Testis (tissue), 5 donors: ENCODE measurements at regions of chr12 and their contacts with region 1.

Region 1: DNA sequence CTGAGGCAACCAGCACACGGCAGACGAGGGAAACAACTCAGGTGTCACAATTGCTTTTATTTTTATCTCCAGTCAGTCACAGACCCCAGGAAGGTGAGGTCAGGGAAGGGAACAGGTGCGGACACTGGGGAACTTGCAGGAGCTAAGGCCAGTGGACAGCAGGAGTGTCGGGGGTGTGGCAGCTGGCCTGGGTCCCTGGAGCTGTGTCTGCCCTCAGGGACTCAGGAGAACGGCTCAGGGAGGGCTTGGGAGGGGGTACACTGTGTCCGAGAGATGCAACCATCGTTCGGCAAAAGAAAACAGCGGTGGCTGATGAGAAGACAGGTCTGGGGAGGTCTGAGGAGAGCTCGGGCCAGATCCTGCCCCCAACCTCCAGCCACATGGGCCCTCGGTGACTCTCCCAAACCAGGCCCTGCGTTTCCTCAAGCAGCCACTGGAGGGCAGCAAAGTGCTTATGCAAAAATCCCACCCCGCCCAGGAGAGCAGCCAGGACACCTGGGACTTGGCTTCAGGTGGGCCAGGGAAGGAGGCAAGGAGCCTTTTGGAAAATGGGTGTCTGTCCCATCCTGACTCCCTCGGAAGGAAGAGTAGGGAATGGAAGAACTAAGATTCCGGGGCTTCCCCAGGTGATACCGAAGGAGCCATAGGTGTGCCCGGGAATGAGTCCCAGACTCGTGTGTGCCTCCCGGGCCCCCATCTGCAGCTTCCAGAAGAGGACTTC is 24.1 kb upstream of the BCDIN3D start:
- DNase-seq: peak; percentile 88
- H3K4me3 ChIP-seq: no peak overlapping the region
- H3K27ac ChIP-seq: no peak overlapping the region
- H3K4me1 ChIP-seq: peaks cover 38% of the 10 kb centered on the region
- H3K27me3 ChIP-seq: no peaks in the 10 kb centered on the region
- CTCF ChIP-seq: peak; percentile 90 to 98 (median 92)
- POLR2A ChIP-seq: no peak

Region 2: GRCh38 chr12:49098035-49098451 is 769.0 kb before region 1 on chr12:
- intact Hi-C with region 1: no loop called
- DNase-seq: peak; percentile 75
- H3K4me3 ChIP-seq: no peak overlapping the region
- H3K27ac ChIP-seq: no peak overlapping the region
- H3K4me1 ChIP-seq: peaks cover 5% of the 10 kb centered on the region
- H3K27me3 ChIP-seq: no peaks in the 10 kb centered on the region
- CTCF ChIP-seq: peak; percentile 76 to 80 (median 76)
- POLR2A ChIP-seq: no peak

Region 3: DNA sequence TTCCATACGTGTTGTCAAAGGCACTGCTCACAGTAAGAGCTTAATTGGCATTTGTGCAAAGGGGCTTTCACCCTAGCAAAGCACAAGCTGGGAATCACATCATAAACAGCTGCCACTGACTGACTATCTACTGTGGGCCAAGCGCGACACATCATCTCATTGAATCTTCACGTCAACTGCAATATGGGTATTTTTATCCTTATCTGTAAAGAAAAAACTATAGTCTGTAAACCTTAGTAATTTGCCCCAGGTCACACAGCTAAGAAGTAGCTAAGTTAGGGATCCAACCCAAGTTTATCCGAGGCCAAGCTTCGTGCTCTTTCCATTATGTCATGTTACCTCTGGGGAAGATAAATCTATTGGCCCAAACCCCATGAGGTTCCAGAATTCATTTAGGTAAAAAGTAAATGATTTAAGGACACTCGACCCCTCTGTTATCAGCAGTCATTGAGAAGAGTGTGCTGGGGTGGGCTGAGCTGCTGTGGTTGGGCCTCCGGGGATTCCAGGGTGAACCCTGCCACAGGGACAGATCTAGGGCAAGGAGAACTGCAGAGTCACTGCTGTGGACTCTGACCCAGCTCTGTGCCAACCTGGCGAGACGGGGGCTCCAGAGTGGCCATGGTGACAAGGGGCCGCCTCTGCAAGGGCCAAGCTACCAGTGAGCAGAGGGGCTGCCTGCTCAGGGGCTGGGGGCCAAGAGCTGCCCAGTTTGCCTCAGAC is 66.4 kb before region 1 on chr12:
- intact Hi-C with region 1: no loop called
- DNase-seq: no peak
- H3K4me3 ChIP-seq: no peak overlapping the region
- H3K27ac ChIP-seq: no peak overlapping the region
- H3K4me1 ChIP-seq: peaks cover 20% of the 10 kb centered on the region
- H3K27me3 ChIP-seq: no peaks in the 10 kb centered on the region
- CTCF ChIP-seq: no peak
- POLR2A ChIP-seq: no peak

Region 4: GRCh38 chr12:49959570-49960465 is 92.8 kb after region 1 on chr12:
- intact Hi-C with region 1: loop called (anchors 10 kb)
- DNase-seq: peak; percentile 37
- H3K4me3 ChIP-seq: no peak overlapping the region
- H3K27ac ChIP-seq: no peak overlapping the region
- H3K4me1 ChIP-seq: peaks cover 15% of the 10 kb centered on the region
- H3K27me3 ChIP-seq: no peaks in the 10 kb centered on the region
- CTCF ChIP-seq: no peak
- POLR2A ChIP-seq: no peak

Region 5: DNA sequence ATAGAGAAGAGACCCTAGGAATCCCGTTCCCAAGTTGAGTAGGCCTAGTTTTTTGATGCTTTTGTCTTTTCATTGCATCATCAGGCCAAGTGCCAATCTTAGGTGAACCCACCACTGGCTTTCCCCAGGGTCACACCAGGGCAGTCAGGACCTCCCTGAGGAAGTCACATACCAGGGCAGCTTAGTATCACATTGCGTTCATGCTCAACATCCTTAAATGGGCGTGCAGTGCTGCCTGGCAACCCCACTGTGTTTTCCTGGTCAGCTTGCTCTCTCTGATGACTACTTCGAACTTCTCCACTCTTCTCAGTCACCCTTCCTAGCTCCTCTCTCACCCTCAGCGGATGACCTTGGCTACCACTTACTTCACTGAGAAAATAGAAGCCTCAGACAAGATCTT is 199.4 kb after region 1 on chr12:
- intact Hi-C with region 1: loop called (anchors 10 kb)
- DNase-seq: no peak
- H3K4me3 ChIP-seq: no peak overlapping the region
- H3K27ac ChIP-seq: no peak overlapping the region
- H3K4me1 ChIP-seq: no peaks in the 10 kb centered on the region
- H3K27me3 ChIP-seq: no peaks in the 10 kb centered on the region
- CTCF ChIP-seq: no peak
- POLR2A ChIP-seq: no peak